Adrenal gland (tissue), 19 donors: ENCODE measurements at regions of chr16 and their contacts with region 1.

Region 1: GRCh38 chr16:29112755-29113347 is 128.0 kb downstream of the LAT start:
- DNase-seq: no peak
- H3K4me3 ChIP-seq: no peak overlapping the region
- H3K27ac ChIP-seq: no peak overlapping the region
- H3K4me1 ChIP-seq: peaks cover 0 to 10% of the 10 kb centered on the region in 2 donors
- H3K27me3 ChIP-seq: no peaks in the 10 kb centered on the region
- CTCF ChIP-seq: no peak
- POLR2A ChIP-seq: no peak

Region 2: GRCh38 chr16:29256501-29256981 is 143.7 kb after region 1 on chr16:
- intact Hi-C with region 1: loop called in 1 of 2 experiments (anchors 10 kb)
- DNase-seq: no peak
- H3K4me3 ChIP-seq: no peak overlapping the region
- H3K27ac ChIP-seq: no peak overlapping the region
- H3K4me1 ChIP-seq: peaks cover 11 to 14% of the 10 kb centered on the region in 2 donors
- H3K27me3 ChIP-seq: no peaks in the 10 kb centered on the region
- CTCF ChIP-seq: no peak
- POLR2A ChIP-seq: no peak